ENCODE measurements at regions of chr11 and their contacts with region 1.

Region 1: GRCh38 chr11:128172046-128172878 is 415.1 kb downstream of the ETS1 start:
- DNase-seq: peak; percentile 86
- ATAC-seq: peak; percentile 70
- H3K4me3 ChIP-seq: no peak overlapping the region
- H3K4me3 Mint-ChIP-seq: no peak overlapping the region
- H3K27ac ChIP-seq: no peak overlapping the region
- H3K27ac Mint-ChIP-seq: no peak overlapping the region
- H3K4me1 ChIP-seq: peaks cover 3 to 4% of the 10 kb centered on the region in 2 donors
- H3K4me1 Mint-ChIP-seq: peaks cover 3% of the 10 kb centered on the region
- H3K27me3 ChIP-seq: peaks cover 0 to 4% (median 0%) of the 10 kb centered on the region in 4 experiments
- H3K27me3 Mint-ChIP-seq: peaks cover 10% of the 10 kb centered on the region
- CTCF ChIP-seq: peak; percentile 89

Region 2: DNA sequence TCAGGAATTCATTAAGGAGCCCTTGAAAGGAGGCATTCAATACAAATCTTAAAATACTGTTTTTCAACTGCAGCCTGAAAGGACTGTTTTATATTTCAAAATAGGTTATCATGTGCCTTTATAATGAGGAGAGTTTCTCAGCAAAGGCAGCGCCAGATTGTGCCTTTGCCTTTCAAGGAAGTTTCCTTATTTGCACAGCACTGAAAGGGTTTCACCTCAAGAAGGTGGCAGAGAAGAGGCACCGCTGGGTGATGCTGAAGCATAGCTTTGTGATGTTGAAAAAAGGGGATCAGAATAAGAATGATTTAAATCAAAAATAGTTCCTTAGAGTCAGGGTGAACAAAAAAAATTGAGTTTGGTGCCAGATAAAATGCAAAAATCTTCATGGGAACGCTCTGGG is 570.7 kb before region 1 on chr11:
- CTCF ChIA-PET with region 1: no interaction called
- POLR2A ChIA-PET with region 1: no interaction called
- intact Hi-C with region 1: no loop called
- DNase-seq: no peak
- ATAC-seq: no peak
- H3K4me3 ChIP-seq: no peak overlapping the region
- H3K4me3 Mint-ChIP-seq: no peak overlapping the region
- H3K27ac ChIP-seq: no peak overlapping the region
- H3K27ac Mint-ChIP-seq: no peak overlapping the region
- H3K4me1 ChIP-seq: no peaks in the 10 kb centered on the region
- H3K4me1 Mint-ChIP-seq: no peaks in the 10 kb centered on the region
- H3K27me3 ChIP-seq: no peaks in the 10 kb centered on the region
- H3K27me3 Mint-ChIP-seq: no peaks in the 10 kb centered on the region
- CTCF ChIP-seq: no peak

Region 3: DNA sequence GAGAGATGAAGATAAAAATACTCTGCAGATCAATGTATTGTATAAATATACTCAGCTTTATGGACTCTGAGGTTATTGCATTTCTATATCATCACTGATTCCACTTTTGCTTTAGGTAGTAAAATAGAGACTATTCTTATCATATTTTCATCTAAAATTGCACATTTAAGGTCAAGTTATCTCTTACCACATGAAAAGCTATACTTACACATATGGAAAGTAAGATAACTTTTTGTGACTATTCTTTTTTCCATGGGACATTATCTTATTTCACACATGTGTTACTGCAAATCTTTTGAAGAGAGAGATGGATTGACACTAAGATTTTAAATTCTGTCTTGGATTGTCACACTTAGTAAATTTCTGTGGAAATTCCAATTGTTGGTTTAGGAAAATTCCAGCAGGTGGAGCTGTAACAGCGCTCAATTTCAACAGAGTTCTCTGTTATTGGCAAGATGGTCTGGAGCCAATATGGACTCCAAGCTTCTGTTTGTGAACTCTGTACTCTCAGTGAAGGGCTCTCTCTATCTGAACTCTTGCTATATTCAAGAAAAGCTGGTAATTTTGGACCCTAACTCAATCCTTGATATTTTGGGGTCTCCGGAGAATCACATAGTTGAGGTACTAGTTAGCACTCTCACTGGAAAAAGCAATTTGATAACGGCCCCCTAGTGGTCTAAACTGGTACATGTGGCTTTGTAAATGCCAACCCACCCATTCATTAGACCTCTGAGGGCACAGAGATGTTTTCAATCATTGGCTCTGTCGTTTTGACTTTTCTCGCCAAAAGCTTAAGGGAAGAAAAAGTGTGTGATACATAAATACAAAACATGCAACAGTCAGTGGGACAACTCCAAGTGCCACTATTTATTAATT is 14.6 kb before region 1 on chr11:
- CTCF ChIA-PET with region 1: interaction called, 121 read pairs
- POLR2A ChIA-PET with region 1: no interaction called
- intact Hi-C with region 1: loop called (anchors 1 kb)
- DNase-seq: peak; percentile 82
- ATAC-seq: peak; percentile 91
- H3K4me3 ChIP-seq: peak overlapping the region in 3 of 5 experiments; percentile 22 to 37 (median 23)
- H3K4me3 Mint-ChIP-seq: peak overlapping the region; percentile 81
- H3K27ac ChIP-seq: no peak overlapping the region
- H3K27ac Mint-ChIP-seq: no peak overlapping the region
- H3K4me1 ChIP-seq: peaks cover 0 to 3% of the 10 kb centered on the region in 2 donors
- H3K4me1 Mint-ChIP-seq: peaks cover 2% of the 10 kb centered on the region
- H3K27me3 ChIP-seq: peaks cover 0 to 7% (median 0%) of the 10 kb centered on the region in 4 experiments
- H3K27me3 Mint-ChIP-seq: peaks cover 15% of the 10 kb centered on the region
- CTCF ChIP-seq: peak; percentile 99

Region 4: GRCh38 chr11:128482512-128483191 is 310.4 kb after region 1 on chr11:
- CTCF ChIA-PET with region 1: interaction called, 4 read pairs
- POLR2A ChIA-PET with region 1: no interaction called
- intact Hi-C with region 1: loop called (anchors 5 kb)
- DNase-seq: no peak
- ATAC-seq: peak; percentile 13
- H3K4me3 ChIP-seq: peak overlapping the region in 2 of 5 experiments; percentile 27 to 37
- H3K4me3 Mint-ChIP-seq: peak overlapping the region; percentile 61
- H3K27ac ChIP-seq: peak overlapping the region; percentile 77 to 90
- H3K27ac Mint-ChIP-seq: peak overlapping the region; percentile 95
- H3K4me1 ChIP-seq: peaks cover 82% of the 10 kb centered on the region in 2 donors
- H3K4me1 Mint-ChIP-seq: peaks cover 92% of the 10 kb centered on the region
- H3K27me3 ChIP-seq: no peaks in the 10 kb centered on the region
- H3K27me3 Mint-ChIP-seq: no peaks in the 10 kb centered on the region
- CTCF ChIP-seq: no peak

Region 5: GRCh38 chr11:128695539-128696221 is 523.4 kb after region 1 on chr11:
- CTCF ChIA-PET with region 1: no interaction called
- POLR2A ChIA-PET with region 1: no interaction called
- intact Hi-C with region 1: loop called (anchors 2 kb)
- DNase-seq: peak; percentile 81
- ATAC-seq: peak; percentile 53
- H3K4me3 ChIP-seq: peak overlapping the region; percentile 62 to 100 (median 94)
- H3K4me3 Mint-ChIP-seq: peak overlapping the region; percentile 94
- H3K27ac ChIP-seq: peak overlapping the region; percentile 61 to 92
- H3K27ac Mint-ChIP-seq: peak overlapping the region; percentile 95
- H3K4me1 ChIP-seq: peaks cover 55 to 62% of the 10 kb centered on the region in 2 donors
- H3K4me1 Mint-ChIP-seq: peaks cover 62% of the 10 kb centered on the region
- H3K27me3 ChIP-seq: peaks cover 0 to 12% (median 4%) of the 10 kb centered on the region in 4 experiments
- H3K27me3 Mint-ChIP-seq: no peaks in the 10 kb centered on the region
- CTCF ChIP-seq: no peak

Region 6: DNA sequence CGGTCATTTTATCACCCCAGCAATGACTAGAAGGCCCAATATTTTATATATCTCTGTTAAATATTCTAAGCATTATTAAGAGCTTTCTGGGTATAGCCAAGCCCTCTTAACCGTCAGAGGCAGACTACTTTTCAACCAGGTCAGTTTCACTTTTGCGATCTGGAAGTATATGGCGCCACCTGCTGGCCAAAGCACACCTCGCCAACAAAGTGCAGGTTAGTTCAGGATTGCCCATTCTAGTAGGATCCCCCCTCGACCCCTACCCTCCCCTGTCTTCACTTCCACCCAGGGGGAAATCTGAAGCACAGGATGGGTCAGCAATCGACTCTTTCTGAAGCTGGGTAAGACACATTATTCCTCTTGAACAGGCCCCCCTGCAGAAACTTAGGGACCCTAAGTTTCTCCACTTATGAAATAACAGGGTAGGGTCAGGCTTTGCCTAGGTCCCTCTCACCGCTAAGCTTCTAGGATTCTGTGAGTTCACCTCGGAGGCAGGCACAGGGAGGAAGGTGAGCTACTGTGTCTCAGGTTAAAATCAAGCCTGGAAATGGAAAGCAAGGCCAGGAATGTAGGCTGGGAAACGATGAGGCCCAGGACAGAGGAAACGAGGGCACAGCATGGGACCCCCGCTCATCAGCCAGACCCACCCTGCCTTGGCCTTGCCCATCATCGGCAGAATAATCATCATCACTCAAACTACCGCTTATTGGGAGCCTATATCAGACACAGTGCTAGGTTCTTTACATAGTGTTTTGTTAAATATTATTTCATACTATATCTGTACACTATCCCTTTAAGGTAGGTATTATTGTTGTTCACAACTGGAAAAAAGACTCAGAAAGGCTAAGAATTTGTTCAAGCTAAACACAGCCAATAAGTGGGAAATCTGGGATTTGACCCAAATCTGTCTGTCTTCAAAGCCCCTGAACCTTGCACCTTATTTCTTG is 659.2 kb after region 1 on chr11:
- CTCF ChIA-PET with region 1: interaction called, 125 read pairs
- POLR2A ChIA-PET with region 1: interaction called, 3 read pairs
- intact Hi-C with region 1: loop called (anchors 1 kb)
- DNase-seq: peak; percentile 88
- ATAC-seq: peak; percentile 89
- H3K4me3 ChIP-seq: peak overlapping the region; percentile 22 to 55 (median 36)
- H3K4me3 Mint-ChIP-seq: peak overlapping the region; percentile 74
- H3K27ac ChIP-seq: peak overlapping the region; percentile 60 to 78
- H3K27ac Mint-ChIP-seq: peak overlapping the region; percentile 90
- H3K4me1 ChIP-seq: peaks cover 66 to 68% of the 10 kb centered on the region in 2 donors
- H3K4me1 Mint-ChIP-seq: peaks cover 73% of the 10 kb centered on the region
- H3K27me3 ChIP-seq: no peaks in the 10 kb centered on the region
- H3K27me3 Mint-ChIP-seq: no peaks in the 10 kb centered on the region
- CTCF ChIP-seq: peak; percentile 93

Region 7: DNA sequence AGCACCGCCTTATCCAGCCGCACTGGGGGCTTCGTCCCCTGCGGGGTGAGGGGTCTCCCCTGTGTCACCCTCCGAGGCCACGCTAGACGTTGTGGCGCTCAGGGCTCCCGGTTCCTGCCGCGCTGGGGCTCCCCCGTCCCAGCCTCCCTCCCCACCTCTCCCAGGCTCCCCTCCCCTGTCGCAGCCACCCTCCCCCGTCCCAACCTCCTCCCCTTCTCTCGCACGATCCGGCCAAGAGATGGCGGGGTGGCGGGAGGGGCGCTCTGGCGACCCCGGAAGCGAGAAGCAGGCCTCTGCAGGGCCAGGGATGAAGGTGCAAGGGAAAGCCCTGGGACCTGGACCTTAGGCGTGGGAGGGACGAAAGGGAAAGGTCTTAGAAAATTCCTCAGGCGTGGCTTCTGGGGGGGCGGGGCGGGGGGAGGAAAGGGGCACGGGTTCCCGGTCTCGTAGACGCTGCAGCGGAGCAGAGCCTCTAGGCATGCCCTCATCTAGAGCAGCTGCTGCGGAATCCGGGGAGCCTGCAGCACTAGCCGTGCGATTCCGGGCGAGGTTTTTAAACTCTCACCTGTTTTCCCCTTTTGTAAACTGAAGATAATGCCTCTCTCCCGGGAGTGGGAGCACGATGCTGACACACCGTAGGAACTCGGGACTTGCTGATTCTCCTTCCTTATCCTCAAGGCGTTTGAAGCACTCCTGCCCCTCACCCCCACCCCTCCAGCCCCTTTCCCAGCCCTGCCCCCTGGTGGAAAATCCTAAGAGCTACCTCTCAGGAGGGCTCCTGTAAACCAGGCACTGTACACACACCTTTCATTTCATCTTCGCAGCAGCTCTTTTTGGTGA is 733.3 kb after region 1 on chr11:
- CTCF ChIA-PET with region 1: interaction called, 24 read pairs
- POLR2A ChIA-PET with region 1: no interaction called
- intact Hi-C with region 1: no loop called
- DNase-seq: peak; percentile 60
- ATAC-seq: peak; percentile 57
- H3K4me3 ChIP-seq: peak overlapping the region; percentile 8 to 81 (median 59)
- H3K4me3 Mint-ChIP-seq: peak overlapping the region; percentile 81
- H3K27ac ChIP-seq: no peak overlapping the region
- H3K27ac Mint-ChIP-seq: peak overlapping the region; percentile 50
- H3K4me1 ChIP-seq: peaks cover 21 to 28% of the 10 kb centered on the region in 2 donors
- H3K4me1 Mint-ChIP-seq: peaks cover 26% of the 10 kb centered on the region
- H3K27me3 ChIP-seq: peaks cover 0 to 92% (median 57%) of the 10 kb centered on the region in 4 experiments
- H3K27me3 Mint-ChIP-seq: peaks cover 69% of the 10 kb centered on the region
- CTCF ChIP-seq: peak; percentile 60